ENCODE measurements at regions of chr9 and their contacts with region 1.

Region 1: DNA sequence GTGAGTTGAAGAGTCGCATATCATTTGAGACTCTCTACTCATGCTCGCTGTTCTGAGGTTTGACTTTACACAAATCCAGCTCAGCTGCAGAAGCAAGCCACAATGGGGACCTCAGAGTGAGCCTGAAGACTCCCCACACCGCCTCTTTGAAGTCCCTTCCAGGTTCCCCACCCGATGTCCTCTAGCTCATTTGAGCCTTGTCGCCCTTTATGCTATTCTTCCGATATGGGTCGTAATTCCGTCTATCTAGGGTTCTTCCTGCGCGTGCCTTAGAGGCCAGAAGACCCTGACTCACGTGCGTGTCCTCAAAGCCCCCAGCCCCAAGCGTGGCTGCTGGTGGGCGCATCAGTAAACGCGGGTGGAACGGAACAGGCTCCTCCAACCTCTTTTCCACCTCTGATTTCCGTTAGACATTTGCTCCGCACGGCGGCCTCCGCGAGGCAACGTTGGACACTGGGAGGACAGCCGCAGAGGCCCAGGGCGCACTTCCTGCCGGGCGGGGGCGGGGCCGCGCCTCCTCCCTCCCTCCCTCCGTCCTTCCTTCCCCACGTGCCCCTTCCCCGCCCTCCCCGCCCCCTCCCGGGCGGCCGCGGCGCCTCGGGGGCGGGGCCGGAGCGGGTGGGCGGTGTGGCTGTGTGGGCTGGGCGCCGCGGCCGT is at the start of gene SNX30:
- DNase-seq: peak; percentile 85
- H3K4me3 ChIP-seq: peak within 1 kb of the TSS; percentile 57 to 97
- H3K27ac ChIP-seq: peak within 1 kb of the TSS; percentile 75 to 82
- H3K4me1 ChIP-seq: no peaks in the 10 kb centered on the region
- H3K27me3 ChIP-seq: no peaks in the 10 kb centered on the region
- CTCF ChIP-seq: peak in 2 of 4 experiments; percentile 13 to 15
- POLR2A ChIP-seq: peak; percentile 61
- total RNA-seq, gene SNX30: 6.3 to 38.7 TPM

Region 2: GRCh38 chr9:112404508-112404932 is 345.7 kb before region 1 on chr9:
- intact Hi-C with region 1: no loop called
- DNase-seq: no peak
- H3K4me3 ChIP-seq: no peak overlapping the region
- H3K27ac ChIP-seq: no peak overlapping the region
- H3K4me1 ChIP-seq: no peaks in the 10 kb centered on the region
- H3K27me3 ChIP-seq: no peaks in the 10 kb centered on the region
- CTCF ChIP-seq: no peak
- POLR2A ChIP-seq: no peak

Region 3: DNA sequence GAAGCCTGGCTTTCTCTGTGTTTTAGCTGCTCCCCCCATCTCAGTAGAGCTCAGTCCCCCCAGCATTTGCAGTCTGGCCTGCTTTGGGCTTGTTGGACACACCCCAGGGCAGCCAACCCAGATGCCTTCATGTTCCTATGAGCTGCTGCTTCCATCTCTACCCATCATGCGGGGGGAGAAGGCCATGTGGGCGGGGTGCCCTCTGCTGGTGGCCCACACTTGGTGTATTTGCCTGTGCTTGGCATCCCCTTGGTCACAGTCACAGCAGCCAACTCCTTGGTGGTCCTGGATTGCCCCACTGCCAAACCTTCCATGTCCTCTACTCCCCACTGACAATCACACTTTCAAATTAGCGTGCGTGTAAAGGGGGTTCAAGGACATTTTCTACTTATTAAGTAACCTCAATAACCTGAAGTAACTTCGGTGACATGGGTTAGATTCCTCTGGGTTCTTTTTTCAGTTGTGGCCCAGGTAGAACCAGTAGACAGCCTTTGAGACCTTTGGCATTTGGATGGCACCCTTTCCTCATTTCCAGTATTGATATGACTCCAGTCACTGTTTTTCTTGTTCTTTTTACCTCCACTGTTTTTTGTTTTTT is 43.1 kb after region 1 on chr9:
- intact Hi-C with region 1: loop called (anchors 5 kb)
- DNase-seq: peak; percentile 26
- H3K4me3 ChIP-seq: no peak overlapping the region
- H3K27ac ChIP-seq: no peak overlapping the region
- H3K4me1 ChIP-seq: no peaks in the 10 kb centered on the region
- H3K27me3 ChIP-seq: no peaks in the 10 kb centered on the region
- CTCF ChIP-seq: peak in 3 of 4 experiments; percentile 29 to 58 (median 35)
- POLR2A ChIP-seq: no peak